ENCODE measurements at regions of chr10 and their contacts with region 1.

Region 1: GRCh38 chr10:116296291-116296721 is 23.3 kb upstream of the GFRA1 start:
- DNase-seq: no peak
- H3K4me3 ChIP-seq: no peak overlapping the region
- H3K27ac ChIP-seq: no peak overlapping the region
- H3K4me1 ChIP-seq: no peaks in the 10 kb centered on the region
- H3K27me3 ChIP-seq: no peaks in the 10 kb centered on the region
- CTCF ChIP-seq: no peak
- EP300 ChIP-seq: no peak
- POLR2A ChIP-seq: no peak

Region 2: DNA sequence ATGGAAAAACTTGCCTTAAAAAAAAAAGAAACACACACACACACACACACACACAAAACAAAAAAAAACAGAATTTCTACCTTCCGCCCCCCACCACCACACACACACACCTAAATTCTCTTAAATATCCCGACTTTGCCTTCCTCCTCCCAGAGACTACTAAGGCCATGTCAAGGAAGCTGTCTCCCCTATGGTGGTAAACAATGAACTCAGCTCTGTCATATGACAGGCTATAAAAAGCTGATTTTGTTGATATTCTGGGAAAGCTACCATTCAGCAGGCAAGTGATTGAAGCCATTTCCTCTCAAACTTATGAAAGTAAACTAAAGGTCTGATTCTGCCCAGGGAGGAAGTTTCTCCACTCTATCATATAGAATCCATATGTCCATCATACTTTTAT is 494.3 kb before region 1 on chr10:
- intact Hi-C with region 1: loop called in 1 of 4 experiments (anchors 10 kb)
- DNase-seq: no peak
- H3K4me3 ChIP-seq: no peak overlapping the region
- H3K27ac ChIP-seq: no peak overlapping the region
- H3K4me1 ChIP-seq: no peaks in the 10 kb centered on the region
- H3K27me3 ChIP-seq: no peaks in the 10 kb centered on the region
- CTCF ChIP-seq: no peak
- EP300 ChIP-seq: no peak
- POLR2A ChIP-seq: no peak

Region 3: GRCh38 chr10:116316533-116316932 is 20.2 kb after region 1 on chr10:
- intact Hi-C with region 1: no loop called
- DNase-seq: no peak
- H3K4me3 ChIP-seq: no peak overlapping the region
- H3K27ac ChIP-seq: no peak overlapping the region
- H3K4me1 ChIP-seq: no peaks in the 10 kb centered on the region
- H3K27me3 ChIP-seq: no peaks in the 10 kb centered on the region
- CTCF ChIP-seq: no peak
- EP300 ChIP-seq: no peak
- POLR2A ChIP-seq: no peak